SK-N-SH (cell line): ENCODE measurements at regions of chr7 and their contacts with region 1.

Region 1: DNA sequence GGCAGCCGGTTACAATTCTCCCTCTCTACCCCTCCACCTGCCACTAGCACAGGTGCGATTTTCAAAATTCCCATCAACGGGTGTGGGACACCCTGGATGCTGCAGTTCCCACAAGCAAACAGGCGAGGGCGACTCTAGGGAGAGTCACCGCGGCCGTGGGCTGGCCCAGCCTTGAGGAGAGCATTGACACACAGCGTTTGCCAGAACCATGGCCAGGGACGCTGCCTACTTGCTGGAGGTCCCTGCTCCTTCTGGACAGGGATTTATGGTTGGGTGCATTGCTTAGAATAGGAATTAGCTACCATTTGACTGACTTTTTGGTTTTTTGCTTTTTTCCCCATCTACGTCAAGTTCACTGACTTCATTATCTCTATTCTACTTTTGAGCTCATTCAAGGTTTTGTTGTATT is 19.0 kb upstream of the CLDN4 start:
- DNase-seq: peak; percentile 87
- H3K4me3 ChIP-seq: no peak overlapping the region; a peak in 1 of 4 replicates
- H3K27ac ChIP-seq: no peak overlapping the region
- H3K4me1 ChIP-seq: no peaks in the 10 kb centered on the region
- H3K27me3 ChIP-seq: no peaks in the 10 kb centered on the region
- CTCF ChIP-seq: peak; percentile 87
- EP300 ChIP-seq: no peak
- RAD21 ChIP-seq: peak; percentile 83

Region 2: DNA sequence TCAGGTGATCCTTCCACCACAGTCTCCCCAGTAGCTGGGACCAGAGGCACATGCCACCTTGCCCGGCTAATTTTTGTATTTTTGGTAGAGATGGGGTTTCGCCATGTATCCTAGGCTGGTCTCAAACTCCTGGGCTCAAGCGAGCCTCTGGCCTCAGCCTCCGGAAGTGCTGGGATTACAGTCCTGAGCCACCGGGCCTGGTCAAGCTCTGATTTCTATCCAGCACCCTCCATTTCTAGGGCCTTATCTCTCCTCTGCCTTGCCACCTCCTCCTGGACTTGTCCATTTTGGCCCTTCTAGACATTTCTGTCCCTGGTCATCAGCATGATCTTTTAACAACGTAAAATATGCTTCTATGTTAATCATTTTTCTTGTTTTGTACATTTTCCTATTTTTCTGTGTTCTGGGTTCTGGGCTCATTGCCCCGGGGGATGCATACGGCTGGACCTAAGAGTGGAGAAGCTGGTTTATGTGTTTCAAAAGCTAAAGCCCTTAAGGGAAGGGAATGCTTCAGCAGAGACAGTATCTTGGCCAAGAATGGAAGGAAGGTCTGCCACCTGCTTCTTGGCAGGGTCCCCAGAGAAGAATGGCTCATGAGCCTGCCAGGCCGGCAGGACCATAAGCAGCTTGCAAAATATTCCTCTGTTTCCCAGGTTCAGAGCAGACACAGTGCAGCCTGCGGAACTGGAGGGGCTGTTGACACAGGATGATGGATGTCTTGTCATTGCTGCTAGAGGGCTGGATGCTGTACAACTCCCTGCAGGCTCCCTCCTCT is 65.6 kb before region 1 on chr7:
- CTCF ChIA-PET with region 1: interaction called, 10 read pairs
- POLR2A ChIA-PET with region 1: no interaction called
- DNase-seq: no peak
- H3K4me3 ChIP-seq: no peak overlapping the region
- H3K27ac ChIP-seq: peak overlapping the region in 1 of 2 experiments; percentile 4; a peak in 1 of 4 replicates
- H3K4me1 ChIP-seq: peaks cover 0 to 7% of the 10 kb centered on the region in 2 experiments; a peak in 1 of 4 replicates
- H3K27me3 ChIP-seq: no peaks in the 10 kb centered on the region
- CTCF ChIP-seq: no peak
- EP300 ChIP-seq: no peak
- RAD21 ChIP-seq: no peak

Region 3: GRCh38 chr7:73769992-73770859 is 41.5 kb before region 1 on chr7 and contains the start of gene CLDN3:
- CTCF ChIA-PET with region 1: no interaction called
- POLR2A ChIA-PET with region 1: no interaction called
- DNase-seq: peak; percentile 82
- H3K4me3 ChIP-seq: peak within 1 kb of the TSS; percentile 9 to 37; a peak in 2 of 4 replicates
- H3K27ac ChIP-seq: no peak within 1 kb of the TSS
- H3K4me1 ChIP-seq: peaks cover 0 to 6% of the 10 kb centered on the region in 2 experiments; a peak in 1 of 4 replicates
- H3K27me3 ChIP-seq: no peaks in the 10 kb centered on the region
- CTCF ChIP-seq: no peak
- EP300 ChIP-seq: no peak
- RAD21 ChIP-seq: no peak
- polyA plus RNA-seq, gene CLDN3: 0.05 and 0.08 TPM in 2 replicates

Region 4: GRCh38 chr7:73822319-73823076 is 10.7 kb after region 1 on chr7:
- CTCF ChIA-PET with region 1: interaction called, 48 read pairs
- POLR2A ChIA-PET with region 1: interaction called, 3 read pairs
- DNase-seq: peak; percentile 70
- H3K4me3 ChIP-seq: no peak overlapping the region; a peak in 1 of 4 replicates
- H3K27ac ChIP-seq: peak overlapping the region; percentile 2 to 93; a peak in 3 of 4 replicates
- H3K4me1 ChIP-seq: peaks cover 10 to 22% of the 10 kb centered on the region in 2 experiments
- H3K27me3 ChIP-seq: no peaks in the 10 kb centered on the region
- CTCF ChIP-seq: no peak
- EP300 ChIP-seq: peak; percentile 21 to 95; a peak in 2 of 4 replicates
- RAD21 ChIP-seq: no peak

Region 5: DNA sequence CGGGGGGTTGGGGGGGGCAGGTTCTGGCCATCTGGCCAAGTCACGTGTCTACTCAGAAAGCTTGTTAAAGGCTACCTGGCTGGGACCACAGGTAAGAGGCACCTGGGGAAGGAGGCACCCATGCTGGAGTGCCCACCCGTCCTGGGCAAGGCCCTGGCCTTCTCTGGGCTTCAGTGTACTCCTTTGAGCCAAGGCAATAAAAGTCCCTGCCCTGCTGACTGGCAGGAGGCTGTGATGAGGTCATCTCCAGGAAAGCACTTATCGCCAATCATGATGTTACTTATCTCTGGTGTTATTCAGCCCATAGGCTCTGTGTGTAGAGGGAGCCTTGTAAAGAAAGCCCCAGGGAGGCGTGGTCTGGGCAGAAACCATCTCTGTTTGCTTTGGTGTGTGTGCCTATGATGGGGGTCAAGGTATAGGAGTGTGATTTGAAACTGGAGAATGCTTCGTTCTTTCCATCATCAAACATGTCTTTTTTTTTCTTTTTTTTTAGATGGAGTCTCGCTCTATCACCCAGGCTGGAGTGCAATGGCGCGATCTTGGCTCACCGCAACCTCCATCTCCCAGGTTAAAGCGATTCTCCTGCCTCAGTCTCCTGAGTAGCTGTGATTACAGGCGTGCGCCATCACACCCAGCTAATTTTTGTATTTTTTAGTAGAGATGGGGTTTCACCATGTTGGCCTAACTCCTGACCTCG is 16.5 kb after region 1 on chr7:
- CTCF ChIA-PET with region 1: interaction called, 48 read pairs
- POLR2A ChIA-PET with region 1: interaction called, 3 read pairs
- DNase-seq: peak; percentile 93
- H3K4me3 ChIP-seq: no peak overlapping the region
- H3K27ac ChIP-seq: peak overlapping the region; percentile 19 to 94; a peak in 3 of 4 replicates
- H3K4me1 ChIP-seq: peaks cover 21 to 54% of the 10 kb centered on the region in 2 experiments
- H3K27me3 ChIP-seq: no peaks in the 10 kb centered on the region
- CTCF ChIP-seq: no peak
- EP300 ChIP-seq: no peak; a peak in 1 of 4 replicates
- RAD21 ChIP-seq: no peak; the same call in 1 of the 2 replicates

Region 6: GRCh38 chr7:73851410-73852234 is 39.9 kb after region 1 on chr7:
- CTCF ChIA-PET with region 1: interaction called, 89 read pairs
- POLR2A ChIA-PET with region 1: interaction called, 3 read pairs
- DNase-seq: no peak
- H3K4me3 ChIP-seq: peak overlapping the region in 1 of 2 experiments; percentile 17; a peak in 2 of 4 replicates
- H3K27ac ChIP-seq: peak overlapping the region; percentile 1 to 100; a peak in 3 of 4 replicates
- H3K4me1 ChIP-seq: peaks cover 2 to 22% of the 10 kb centered on the region in 2 experiments; a peak in 3 of 4 replicates
- H3K27me3 ChIP-seq: no peaks in the 10 kb centered on the region
- CTCF ChIP-seq: no peak
- EP300 ChIP-seq: peak; percentile 27 to 97; a peak in 2 of 4 replicates
- RAD21 ChIP-seq: no peak

Region 7: GRCh38 chr7:73858807-73859206 is 47.0 kb after region 1 on chr7:
- CTCF ChIA-PET with region 1: interaction called, 89 read pairs
- POLR2A ChIA-PET with region 1: no interaction called
- DNase-seq: no peak
- H3K4me3 ChIP-seq: no peak overlapping the region
- H3K27ac ChIP-seq: no peak overlapping the region
- H3K4me1 ChIP-seq: no peaks in the 10 kb centered on the region; a peak in 1 of 4 replicates
- H3K27me3 ChIP-seq: no peaks in the 10 kb centered on the region
- CTCF ChIP-seq: no peak
- EP300 ChIP-seq: no peak
- RAD21 ChIP-seq: no peak

Region 8: DNA sequence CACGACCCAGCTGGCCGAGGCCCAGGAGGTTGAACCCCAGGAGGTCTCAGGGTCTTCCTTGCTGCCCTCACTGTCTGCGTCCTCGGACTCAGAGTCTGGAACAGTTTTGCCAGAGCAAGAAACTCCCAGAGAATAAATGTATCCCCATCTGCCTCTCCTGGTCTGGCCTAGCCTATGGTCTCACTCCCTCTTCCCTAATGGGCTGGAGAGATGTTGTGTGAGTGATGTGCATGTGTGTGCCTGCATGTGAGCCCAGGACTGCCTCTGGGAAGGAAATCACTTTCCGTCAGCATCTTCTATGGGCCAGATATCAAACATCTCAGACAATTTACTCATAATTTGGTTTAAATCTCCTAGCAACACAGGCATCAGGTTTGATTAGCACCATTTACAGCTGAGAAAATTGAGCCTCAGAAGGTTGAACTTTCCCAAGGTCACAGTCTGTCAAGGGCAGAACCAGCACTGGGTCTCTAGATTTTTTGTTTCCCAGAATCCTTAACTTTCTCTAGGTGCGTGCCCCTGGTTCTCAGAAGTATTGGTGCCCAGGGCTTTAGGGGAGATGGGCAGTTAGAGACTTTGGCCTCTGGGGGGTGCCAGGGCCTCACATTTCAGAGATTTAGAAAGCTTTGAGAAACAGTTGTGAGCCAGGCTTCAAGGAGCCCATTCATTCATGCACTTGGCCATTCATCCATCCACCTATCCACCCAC is 54.1 kb after region 1 on chr7:
- CTCF ChIA-PET with region 1: interaction called, 11 read pairs
- POLR2A ChIA-PET with region 1: no interaction called
- DNase-seq: peak; percentile 85
- H3K4me3 ChIP-seq: no peak overlapping the region
- H3K27ac ChIP-seq: peak overlapping the region in 1 of 2 experiments; percentile 91; a peak in 2 of 4 replicates
- H3K4me1 ChIP-seq: peaks cover 0 to 35% of the 10 kb centered on the region in 2 experiments; a peak in 1 of 4 replicates
- H3K27me3 ChIP-seq: no peaks in the 10 kb centered on the region
- CTCF ChIP-seq: peak; percentile 95
- EP300 ChIP-seq: peak in 1 of 2 experiments; percentile 62; a peak in 1 of 4 replicates
- RAD21 ChIP-seq: peak; percentile 96